GM23248 (cell line): ENCODE measurements at regions of chr6 and their contacts with region 1.

Region 1: DNA sequence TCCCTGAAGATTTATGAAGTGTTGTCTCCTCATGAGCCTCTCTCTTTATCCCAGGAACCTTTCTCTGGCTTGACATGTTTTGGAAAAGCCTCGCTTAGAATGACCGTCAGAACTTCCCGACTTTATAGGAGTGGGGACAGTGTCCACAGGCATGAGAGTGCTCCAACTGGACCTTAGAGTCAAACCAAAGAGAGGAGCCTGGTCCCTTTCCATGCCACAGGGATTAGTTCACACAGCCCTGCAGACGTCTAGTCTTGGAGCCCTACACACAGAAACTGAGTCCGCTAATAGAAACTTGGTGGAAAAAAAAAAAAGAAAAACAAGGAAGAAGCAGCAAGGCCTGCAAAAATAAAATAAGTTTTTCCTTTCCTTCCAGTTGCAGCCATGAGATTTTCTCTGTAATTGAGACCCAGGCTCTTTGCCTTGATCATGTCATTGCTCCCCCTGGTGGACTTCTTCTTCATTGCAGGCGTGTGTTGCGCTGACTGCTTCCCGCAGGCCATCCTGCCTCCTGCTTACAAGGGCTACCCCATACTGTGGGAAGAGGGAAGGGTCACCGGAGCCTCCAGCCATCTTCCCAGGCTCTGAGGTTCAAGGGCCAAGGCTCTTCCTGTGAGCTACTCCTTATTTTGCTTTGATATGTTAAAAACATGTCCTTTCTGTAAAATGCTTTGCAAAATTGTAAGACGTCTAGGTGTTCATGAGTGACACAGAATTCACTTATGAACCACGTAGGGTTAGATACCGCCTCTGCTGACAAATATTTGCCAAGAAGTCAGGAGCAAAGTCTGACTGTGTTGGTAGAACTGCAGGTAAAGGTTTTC is 201.0 kb downstream of the UST start:
- DNase-seq: peak; percentile 81
- H3K4me3 ChIP-seq: no peak overlapping the region
- H3K27ac ChIP-seq: no peak overlapping the region
- H3K4me1 ChIP-seq: peaks cover 48% of the 10 kb centered on the region
- H3K27me3 ChIP-seq: no peaks in the 10 kb centered on the region

Region 2: GRCh38 chr6:148343047-148343782 is 604.6 kb before region 1 on chr6:
- in situ Hi-C with region 1: no loop called
- DNase-seq: peak; percentile 57
- H3K4me3 ChIP-seq: peak overlapping the region; percentile 76
- H3K27ac ChIP-seq: peak overlapping the region; percentile 84
- H3K4me1 ChIP-seq: peaks cover 40% of the 10 kb centered on the region
- H3K27me3 ChIP-seq: no peaks in the 10 kb centered on the region

Region 3: DNA sequence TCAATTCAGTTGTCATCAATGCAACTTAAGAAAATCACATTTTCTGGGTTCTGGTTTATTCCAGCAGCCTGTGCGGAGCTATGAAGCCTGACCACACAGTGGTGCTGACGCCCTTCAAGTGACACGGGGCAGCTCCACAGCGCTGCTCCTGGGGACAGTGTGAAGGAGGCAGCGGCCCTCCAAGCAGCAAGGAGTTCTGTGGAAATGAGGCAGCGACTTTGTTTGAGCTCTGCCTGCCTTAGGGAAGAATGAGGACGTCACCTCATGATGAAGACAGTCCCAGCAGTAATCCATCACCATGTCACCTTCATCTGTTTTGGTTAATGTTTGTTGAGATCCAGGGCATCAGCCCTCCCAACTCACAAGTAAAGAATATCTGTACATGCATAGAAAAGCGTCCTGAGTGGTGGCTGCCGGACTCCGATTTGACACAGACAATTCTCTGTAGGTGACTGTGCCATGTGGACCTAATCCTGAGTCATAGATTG is 369.5 kb before region 1 on chr6:
- in situ Hi-C with region 1: loop called (anchors 5 kb)
- DNase-seq: peak; percentile 93
- H3K4me3 ChIP-seq: no peak overlapping the region
- H3K27ac ChIP-seq: no peak overlapping the region
- H3K4me1 ChIP-seq: peaks cover 3% of the 10 kb centered on the region; the same call in 1 of the 2 replicates
- H3K27me3 ChIP-seq: no peaks in the 10 kb centered on the region

Region 4: DNA sequence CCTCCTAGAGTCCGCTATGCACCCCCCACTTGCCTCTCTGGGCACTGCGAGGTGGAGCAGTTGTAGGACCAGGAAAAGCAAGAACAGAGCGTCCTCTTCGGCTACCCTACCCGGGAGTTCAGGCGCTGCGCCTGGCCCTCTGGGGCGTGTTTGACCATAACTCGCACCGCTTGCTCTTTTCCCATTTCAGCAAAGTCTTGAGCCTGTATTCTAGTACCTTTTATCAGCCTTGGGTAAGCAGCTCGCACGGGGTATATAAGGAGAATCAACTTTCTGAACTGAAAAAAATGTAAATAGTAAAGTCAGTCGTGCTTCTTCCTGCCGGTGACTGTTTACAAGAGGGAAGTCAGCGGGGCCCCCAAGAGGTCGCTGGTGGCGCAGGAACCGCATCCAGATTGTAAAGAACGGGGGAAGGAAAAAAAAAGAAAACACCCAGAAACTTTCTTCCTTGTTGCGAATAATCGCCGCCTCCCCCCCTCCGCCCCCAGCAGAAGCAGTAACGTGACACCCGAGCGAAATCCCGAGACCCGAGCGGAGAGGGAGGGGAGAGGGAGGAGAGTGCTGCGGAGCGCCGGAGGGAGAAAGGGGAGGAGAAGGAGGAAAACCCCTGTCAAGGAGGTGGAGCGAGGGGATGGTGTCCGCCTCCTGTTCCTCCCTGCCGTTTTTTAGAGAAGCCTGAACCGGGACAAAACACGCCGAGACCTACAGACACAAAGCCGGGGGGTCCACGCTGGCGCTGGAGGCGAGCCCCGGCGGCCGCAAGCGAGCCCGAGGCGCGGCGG is 201.3 kb before region 1 on chr6 and contains the start of gene UST:
- in situ Hi-C with region 1: loop called (anchors 10 kb)
- DNase-seq: peak; percentile 96
- H3K4me3 ChIP-seq: peak within 1 kb of the TSS; percentile 83
- H3K27ac ChIP-seq: peak within 1 kb of the TSS; percentile 79
- H3K4me1 ChIP-seq: peaks cover 26% of the 10 kb centered on the region
- H3K27me3 ChIP-seq: no peaks in the 10 kb centered on the region
- total RNA-seq, gene UST: 23.1 and 23.3 TPM in 2 replicates